BJ (cell line): ENCODE measurements at regions of chr12 and their contacts with region 1.

Region 1: DNA sequence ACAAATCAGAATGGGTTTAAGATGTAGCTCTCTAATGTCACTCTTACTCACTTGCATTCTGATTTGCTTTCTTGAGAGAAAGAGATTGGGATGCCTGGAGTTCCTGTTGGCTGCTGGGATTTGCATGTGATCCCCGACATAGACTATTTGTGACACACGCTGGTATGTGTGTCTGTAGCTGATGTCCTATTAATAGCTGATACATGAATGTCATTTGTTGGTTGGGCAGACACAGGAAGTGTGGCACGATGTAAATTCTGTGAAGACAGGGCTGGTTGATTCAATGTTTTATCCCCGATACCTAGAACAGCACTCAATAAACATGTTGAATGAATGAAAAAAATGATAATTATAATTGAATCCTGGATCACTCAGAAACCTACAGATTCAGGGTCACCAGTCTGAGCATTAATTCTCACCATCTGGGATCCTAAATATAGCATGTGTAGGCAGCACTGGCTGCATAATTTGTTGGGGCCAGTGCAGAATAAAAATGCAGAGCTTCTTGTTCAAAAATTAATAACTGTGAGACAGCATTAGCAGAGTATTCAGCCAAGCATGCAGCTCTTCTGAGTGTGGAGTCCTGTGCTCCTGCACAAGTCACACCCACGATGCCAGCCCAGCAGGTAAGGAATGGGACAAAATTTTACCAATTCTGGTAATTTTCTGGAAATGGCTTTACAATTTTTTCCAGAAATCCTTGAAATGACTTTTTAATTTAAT is 35.5 kb upstream of the SOCS2 start:
- DNase-seq: no peak
- H3K4me3 ChIP-seq: no peak overlapping the region
- H3K27me3 ChIP-seq: no peaks in the 10 kb centered on the region
- CTCF ChIP-seq: no peak

Region 2: GRCh38 chr12:93297032-93297431 is 239.9 kb before region 1 on chr12:
- CTCF ChIA-PET with region 1: no interaction called
- POLR2A ChIA-PET with region 1: no interaction called
- DNase-seq: no peak
- H3K4me3 ChIP-seq: no peak overlapping the region
- H3K27me3 ChIP-seq: no peaks in the 10 kb centered on the region
- CTCF ChIP-seq: no peak

Region 3: DNA sequence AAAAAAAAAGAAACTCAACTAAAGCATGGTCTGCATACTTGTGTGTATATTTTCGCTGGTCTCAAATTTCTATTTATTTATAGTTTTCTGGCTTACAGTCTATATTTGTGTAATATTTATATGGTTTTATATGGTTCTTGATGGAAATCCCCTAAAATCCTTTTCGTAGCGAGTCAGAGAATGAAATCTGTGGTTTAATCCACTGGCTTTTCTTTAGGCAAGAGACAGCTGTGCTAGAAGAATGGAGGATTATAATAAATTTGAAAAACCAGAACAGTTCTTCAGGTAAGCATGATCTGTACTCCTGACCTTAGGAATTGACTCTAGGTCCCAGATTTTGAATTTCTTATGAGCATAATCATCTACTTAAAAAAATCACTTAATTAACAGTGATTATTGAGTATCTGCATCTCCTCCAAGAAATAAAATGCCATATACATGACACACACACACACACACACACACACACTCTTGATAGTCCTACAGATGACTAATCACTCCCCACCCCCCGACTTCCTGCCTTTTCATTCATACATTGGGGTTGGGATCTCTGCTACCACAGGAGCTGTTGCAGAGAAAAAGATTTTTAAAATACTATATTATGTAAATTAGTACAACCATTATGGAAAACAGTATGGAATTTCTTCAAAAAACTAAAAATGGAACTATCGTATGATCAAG is 253.7 kb after region 1 on chr12:
- CTCF ChIA-PET with region 1: no interaction called
- POLR2A ChIA-PET with region 1: interaction called, 21 read pairs
- DNase-seq: no peak
- H3K4me3 ChIP-seq: no peak overlapping the region
- H3K27me3 ChIP-seq: no peaks in the 10 kb centered on the region
- CTCF ChIP-seq: no peak